ENCODE measurements at regions of chr17 and their contacts with region 1.

Region 1: GRCh38 chr17:50865984-50866774 is at the start of gene TOB1:
- DNase-seq: peak; percentile 98
- ATAC-seq: peak; percentile 66
- H3K4me3 Mint-ChIP-seq: peak within 1 kb of the TSS; percentile 99
- H3K27ac Mint-ChIP-seq: peak within 1 kb of the TSS; percentile 99
- H3K4me1 Mint-ChIP-seq: peaks cover 35% of the 10 kb centered on the region
- H3K27me3 Mint-ChIP-seq: peaks cover 12% of the 10 kb centered on the region
- total RNA-seq, gene TOB1: 54.9 to 56.6 TPM

Region 2: GRCh38 chr17:50779747-50780353 is 86.3 kb before region 1 on chr17:
- POLR2A ChIA-PET with region 1: interaction called, 10 read pairs
- DNase-seq: peak; percentile 62
- ATAC-seq: peak; percentile 71
- H3K4me3 Mint-ChIP-seq: peak overlapping the region; percentile 39
- H3K27ac Mint-ChIP-seq: peak overlapping the region; percentile 21
- H3K4me1 Mint-ChIP-seq: peaks cover 17% of the 10 kb centered on the region
- H3K27me3 Mint-ChIP-seq: peaks cover 35% of the 10 kb centered on the region

Region 3: DNA sequence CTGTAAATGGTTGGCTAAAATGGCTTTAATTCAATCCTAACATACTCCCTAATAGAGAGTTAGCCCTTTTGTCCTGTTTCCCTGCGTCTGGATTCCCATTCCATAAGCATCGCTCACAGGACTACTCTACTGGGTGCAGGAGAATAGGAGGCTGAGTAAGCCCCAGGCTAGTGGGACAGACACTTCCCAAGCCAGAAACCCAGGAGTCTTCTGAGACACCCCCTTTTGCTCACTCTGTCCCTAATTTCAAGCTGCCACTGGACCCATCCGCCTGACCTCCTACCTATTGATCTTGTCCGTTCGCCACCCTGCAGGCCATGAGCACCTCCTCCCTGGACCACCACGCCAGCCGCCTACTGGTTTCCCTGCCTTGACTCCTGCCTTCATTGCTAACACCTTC is 16.7 kb after region 1 on chr17:
- POLR2A ChIA-PET with region 1: interaction called, 25 read pairs
- DNase-seq: no peak
- ATAC-seq: no peak
- H3K4me3 Mint-ChIP-seq: no peak overlapping the region
- H3K27ac Mint-ChIP-seq: no peak overlapping the region
- H3K4me1 Mint-ChIP-seq: peaks cover 17% of the 10 kb centered on the region
- H3K27me3 Mint-ChIP-seq: peaks cover 13% of the 10 kb centered on the region

Region 4: GRCh38 chr17:50919321-50920085 is 53.3 kb after region 1 on chr17:
- POLR2A ChIA-PET with region 1: interaction called, 68 read pairs
- DNase-seq: peak; percentile 77
- ATAC-seq: peak; percentile 87
- H3K4me3 Mint-ChIP-seq: peak overlapping the region; percentile 79
- H3K27ac Mint-ChIP-seq: peak overlapping the region; percentile 84
- H3K4me1 Mint-ChIP-seq: peaks cover 25% of the 10 kb centered on the region
- H3K27me3 Mint-ChIP-seq: peaks cover 4% of the 10 kb centered on the region

Region 5: GRCh38 chr17:50944054-50944901 is 78.1 kb after region 1 on chr17:
- POLR2A ChIA-PET with region 1: interaction called, 247 read pairs
- DNase-seq: peak; percentile 84
- ATAC-seq: peak; percentile 91
- H3K4me3 Mint-ChIP-seq: peak overlapping the region; percentile 70
- H3K27ac Mint-ChIP-seq: peak overlapping the region; percentile 70
- H3K4me1 Mint-ChIP-seq: peaks cover 23% of the 10 kb centered on the region
- H3K27me3 Mint-ChIP-seq: no peaks in the 10 kb centered on the region

Region 6: GRCh38 chr17:51120739-51121617 is 254.8 kb after region 1 on chr17 and contains the start of gene SPAG9:
- POLR2A ChIA-PET with region 1: interaction called, 15 read pairs
- DNase-seq: peak; percentile 99
- ATAC-seq: peak; percentile 79
- H3K4me3 Mint-ChIP-seq: peak within 1 kb of the TSS; percentile 89
- H3K27ac Mint-ChIP-seq: peak within 1 kb of the TSS; percentile 96
- H3K4me1 Mint-ChIP-seq: peaks cover 38% of the 10 kb centered on the region
- H3K27me3 Mint-ChIP-seq: no peaks in the 10 kb centered on the region
- total RNA-seq, gene SPAG9: 52.3 to 62.9 TPM

Measured in activated naive CD8-positive, alpha-beta T cell treated with anti-CD3 and anti-CD28 coated beads, Interleukin-2, amount 10 ng/mL, durations not matched to agents 7 days and 5 days (primary cell).